ENCODE measurements at regions of chr16 and their contacts with region 1.

Region 1: GRCh38 chr16:87387942-87388817 is 4.0 kb upstream of the MAP1LC3B start:
- DNase-seq: peak; percentile 91 to 98
- H3K4me3 ChIP-seq: peak overlapping the region; percentile 13 to 27
- H3K27ac ChIP-seq: peak overlapping the region; percentile 85 to 89
- H3K4me1 ChIP-seq: peaks cover 4 to 26% of the 10 kb centered on the region in 2 donors
- H3K27me3 ChIP-seq: no peaks in the 10 kb centered on the region
- CTCF ChIP-seq: no peak

Region 2: DNA sequence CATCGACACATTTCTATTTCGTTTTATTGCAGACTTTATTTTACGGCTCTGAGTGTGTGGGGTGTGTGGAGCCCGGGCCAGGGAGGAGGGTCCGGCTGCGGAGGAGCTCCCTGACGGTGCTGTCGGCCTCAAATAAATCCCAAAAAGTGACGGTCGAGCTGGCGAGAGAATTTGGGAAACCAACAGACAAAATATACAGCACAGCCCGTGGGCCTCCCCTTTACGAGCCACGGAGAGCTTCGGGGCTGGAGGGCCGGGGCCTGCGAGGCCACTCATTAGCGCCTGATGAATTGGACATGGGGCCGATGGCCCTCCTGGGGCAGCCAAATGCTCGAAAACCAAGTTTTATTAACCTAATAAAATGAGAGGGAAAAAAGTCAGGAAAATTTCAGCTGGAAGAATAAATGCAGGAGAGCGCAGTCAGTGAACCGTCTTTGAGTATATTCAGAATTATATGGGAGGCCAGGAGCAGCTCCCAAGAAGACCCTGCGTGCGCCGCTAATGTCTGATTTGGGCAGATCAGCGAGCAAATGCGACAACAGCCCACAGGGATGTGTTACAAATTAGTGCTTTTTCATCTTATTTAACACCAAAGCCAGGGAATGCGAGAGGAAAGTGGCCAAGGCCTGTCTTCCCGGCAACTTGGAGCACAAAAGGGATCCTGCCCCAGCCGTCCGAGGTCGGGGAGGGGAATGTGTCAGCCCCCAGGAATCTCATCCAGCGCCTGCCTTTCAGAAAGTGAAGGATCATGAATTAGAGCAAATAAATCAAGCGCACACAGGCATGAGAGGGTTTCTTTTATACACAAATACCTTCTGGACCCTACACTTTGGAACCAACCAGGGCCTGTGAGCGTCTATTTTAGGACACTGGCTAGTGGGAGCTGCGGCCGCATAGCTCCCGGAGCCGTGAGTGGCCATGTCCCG is 320.1 kb before region 1 on chr16:
- intact Hi-C with region 1: loop called (anchors 5 kb)
- DNase-seq: no peak
- H3K4me3 ChIP-seq: peak overlapping the region in 1 of 2 donors; percentile 44
- H3K27ac ChIP-seq: peak overlapping the region; percentile 77 to 83
- H3K4me1 ChIP-seq: peaks cover 0 to 5% of the 10 kb centered on the region in 2 donors
- H3K27me3 ChIP-seq: no peaks in the 10 kb centered on the region
- CTCF ChIP-seq: no peak

Region 3: DNA sequence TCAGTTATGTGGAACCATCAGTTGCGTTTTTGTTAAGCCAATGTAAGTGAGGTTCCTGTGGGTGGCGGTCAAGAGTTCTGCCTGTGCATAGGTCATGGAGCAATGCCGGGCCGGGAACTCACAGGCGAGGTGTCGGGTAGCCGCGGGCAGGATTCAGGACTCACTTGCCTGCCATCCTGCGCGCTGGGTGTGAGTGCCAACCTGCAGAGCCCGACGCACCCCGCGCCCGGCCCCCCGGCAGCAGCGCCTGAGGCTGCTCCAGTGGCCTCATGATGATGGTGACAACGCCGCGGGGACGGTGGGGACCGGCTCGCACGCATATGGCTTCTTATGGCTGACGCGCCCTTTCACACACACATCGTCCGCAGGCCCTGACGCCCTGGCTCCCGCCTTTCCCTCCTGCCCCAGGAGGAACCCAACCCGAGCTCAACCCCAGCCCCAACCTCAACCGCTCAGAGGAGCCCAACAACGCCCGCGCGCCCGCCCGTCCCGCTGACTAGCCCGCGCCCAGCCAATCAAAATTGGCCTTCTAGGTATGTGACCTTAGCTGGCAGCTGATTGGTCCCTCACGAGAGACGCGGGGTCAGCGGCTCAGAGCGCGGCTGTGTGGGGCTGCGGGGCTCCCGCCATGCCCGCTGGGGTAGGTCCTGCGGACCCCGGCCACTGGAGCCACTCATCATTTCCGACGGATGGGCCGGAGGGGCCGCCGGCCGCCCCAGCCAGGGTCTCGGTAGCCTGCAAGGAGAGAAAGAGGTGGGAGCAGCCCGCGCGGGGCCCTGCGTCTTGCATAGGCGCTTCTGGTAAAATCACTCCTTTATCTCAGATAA is 71.0 kb before region 1 on chr16 and contains the start of gene C16orf95:
- intact Hi-C with region 1: loop called (anchors 1 kb)
- DNase-seq: peak; percentile 80 to 98
- H3K4me3 ChIP-seq: peak within 1 kb of the TSS; percentile 82 to 98
- H3K27ac ChIP-seq: peak within 1 kb of the TSS; percentile 95 to 96
- H3K4me1 ChIP-seq: peaks cover 6% of the 10 kb centered on the region in 2 donors
- H3K27me3 ChIP-seq: no peaks in the 10 kb centered on the region
- CTCF ChIP-seq: peak in 2 of 3 experiments; percentile 69 to 73
- total RNA-seq, gene C16orf95: not detected

Region 4: GRCh38 chr16:87350681-87351319 is 37.4 kb before region 1 on chr16:
- intact Hi-C with region 1: no loop called
- DNase-seq: no peak
- H3K4me3 ChIP-seq: peak overlapping the region in 1 of 2 donors; percentile 33
- H3K27ac ChIP-seq: peak overlapping the region in 1 of 2 donors; percentile 27
- H3K4me1 ChIP-seq: peaks cover 0 to 4% of the 10 kb centered on the region in 2 donors
- H3K27me3 ChIP-seq: no peaks in the 10 kb centered on the region
- CTCF ChIP-seq: no peak

Region 5: GRCh38 chr16:87492721-87493607 is 104.8 kb after region 1 on chr16 and contains the start of gene ZCCHC14:
- intact Hi-C with region 1: loop called (anchors 2 kb)
- DNase-seq: peak; percentile 96 to 99
- H3K4me3 ChIP-seq: peak within 1 kb of the TSS; percentile 57 to 90
- H3K27ac ChIP-seq: peak within 1 kb of the TSS; percentile 21 to 72
- H3K4me1 ChIP-seq: peaks cover 8 to 22% of the 10 kb centered on the region in 2 donors
- H3K27me3 ChIP-seq: no peaks in the 10 kb centered on the region
- CTCF ChIP-seq: peak in 1 of 3 experiments; percentile 22
- total RNA-seq, gene ZCCHC14: 131 TPM

Region 6: GRCh38 chr16:87653234-87653633 is 265.1 kb after region 1 on chr16:
- intact Hi-C with region 1: no loop called
- DNase-seq: no peak
- H3K4me3 ChIP-seq: no peak overlapping the region
- H3K27ac ChIP-seq: no peak overlapping the region
- H3K4me1 ChIP-seq: no peaks in the 10 kb centered on the region
- H3K27me3 ChIP-seq: no peaks in the 10 kb centered on the region
- CTCF ChIP-seq: no peak

Region 7: GRCh38 chr16:87765776-87766484 is 377.8 kb after region 1 on chr16 and contains the start of gene KLHDC4:
- intact Hi-C with region 1: loop called (anchors 5 kb)
- DNase-seq: peak; percentile 57 to 94
- H3K4me3 ChIP-seq: peak within 1 kb of the TSS; percentile 72 to 81
- H3K27ac ChIP-seq: peak within 1 kb of the TSS; percentile 81 to 86
- H3K4me1 ChIP-seq: peaks cover 8 to 9% of the 10 kb centered on the region in 2 donors
- H3K27me3 ChIP-seq: no peaks in the 10 kb centered on the region
- CTCF ChIP-seq: no peak
- total RNA-seq, gene KLHDC4: 38.4 TPM

Measured in ascending aorta (tissue), 2 donors.